B cell (primary cell): ENCODE measurements at regions of chr18 and their contacts with region 1.

Region 1: DNA sequence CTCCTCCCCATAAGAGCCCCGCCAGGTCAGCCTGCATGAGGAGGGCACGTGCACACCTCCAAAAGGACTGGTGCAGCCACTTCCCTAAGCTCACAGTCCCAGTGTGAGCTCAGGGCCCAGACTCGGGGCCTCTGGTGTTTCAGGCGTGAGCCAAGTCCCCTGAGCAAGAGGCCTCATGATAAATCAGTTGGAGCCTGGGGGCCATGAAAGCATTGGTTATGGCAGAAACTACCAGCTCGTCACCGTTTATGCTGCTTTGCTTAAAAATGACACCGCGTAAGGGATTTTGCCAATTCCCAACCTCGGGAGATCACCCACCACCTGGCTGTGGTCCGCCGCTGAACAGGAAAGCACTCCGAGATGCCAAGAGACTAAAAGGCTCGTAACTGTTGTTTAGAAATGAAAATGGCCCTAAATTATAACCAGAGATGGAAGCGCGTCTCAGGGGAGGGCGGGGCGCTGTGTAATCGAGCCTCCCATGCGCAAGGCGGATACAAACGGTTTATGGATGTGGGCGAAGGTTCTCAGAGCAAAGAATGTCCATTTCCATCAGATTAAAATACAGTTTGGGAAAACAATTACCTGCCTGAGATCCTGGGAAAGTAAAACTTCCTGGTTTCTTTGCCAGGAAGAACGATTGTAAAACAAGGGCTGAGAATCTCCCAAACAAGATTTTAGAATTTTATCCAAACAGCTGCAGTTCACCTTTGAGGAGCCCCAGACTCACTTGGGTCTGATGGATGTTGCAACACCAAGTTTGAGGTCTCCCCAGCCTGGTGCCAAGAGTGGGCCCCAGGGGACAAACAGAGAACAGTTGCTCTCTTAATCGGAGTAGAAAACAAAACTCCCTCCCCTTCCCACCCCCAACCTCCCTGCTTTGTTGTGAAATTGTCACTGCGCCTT is 141.4 kb downstream of the BCL2 start:
- DNase-seq: no peak
- ATAC-seq: no peak
- H3K4me3 ChIP-seq: no peak overlapping the region
- H3K4me3 Mint-ChIP-seq: no peak overlapping the region
- H3K27ac ChIP-seq: no peak overlapping the region
- H3K27ac Mint-ChIP-seq: peak overlapping the region; percentile 76
- H3K4me1 ChIP-seq: peaks cover 63 to 73% of the 10 kb centered on the region in 2 donors
- H3K4me1 Mint-ChIP-seq: peaks cover 89% of the 10 kb centered on the region
- H3K27me3 ChIP-seq: no peaks in the 10 kb centered on the region
- H3K27me3 Mint-ChIP-seq: no peaks in the 10 kb centered on the region
- CTCF ChIP-seq: no peak

Region 2: DNA sequence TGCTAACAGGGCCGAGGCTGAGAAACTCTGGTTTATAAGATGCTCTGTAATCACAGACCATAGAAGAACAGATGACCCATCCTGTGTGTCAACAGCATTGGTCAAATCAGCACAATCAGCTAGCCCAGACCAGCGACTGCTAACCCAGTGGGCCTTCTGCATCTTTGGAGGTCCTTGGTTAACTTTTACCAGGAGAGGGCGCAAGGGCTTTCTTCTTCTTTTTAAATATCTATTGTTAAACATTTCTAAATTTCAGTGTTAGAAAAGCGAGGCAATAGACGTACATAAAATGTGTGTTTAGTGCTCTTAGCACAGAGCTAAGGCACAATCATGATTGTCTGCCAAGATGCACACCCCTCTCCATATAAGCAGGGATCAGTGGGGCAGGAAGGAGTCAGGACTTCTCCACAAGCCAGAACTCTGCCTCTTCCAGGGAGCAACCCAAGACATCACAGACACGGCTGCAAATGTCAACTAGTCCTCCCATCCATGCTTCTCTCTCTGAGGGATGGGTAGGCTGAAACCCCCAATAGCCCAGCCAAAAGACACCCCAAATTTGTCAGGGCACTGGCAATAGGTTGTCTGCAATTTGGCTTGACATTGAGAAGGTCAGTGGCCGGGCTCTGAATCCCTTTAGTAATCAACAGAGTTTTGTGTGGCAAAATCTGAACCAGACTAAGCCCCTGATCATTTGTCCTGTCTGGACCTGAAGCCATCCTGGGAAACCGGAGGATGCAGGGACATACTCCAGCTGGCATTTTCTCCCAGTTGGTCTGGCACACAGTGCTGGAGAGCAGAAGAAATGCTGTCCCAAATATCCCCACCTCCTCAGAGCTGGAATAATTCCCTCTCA is 46.8 kb before region 1 on chr18:
- CTCF ChIA-PET with region 1: interaction called, 10 read pairs
- POLR2A ChIA-PET with region 1: no interaction called
- intact Hi-C with region 1: loop called (anchors 10 kb)
- DNase-seq: peak; percentile 79
- ATAC-seq: peak; percentile 69
- H3K4me3 ChIP-seq: no peak overlapping the region
- H3K4me3 Mint-ChIP-seq: no peak overlapping the region
- H3K27ac ChIP-seq: peak overlapping the region in 1 of 2 donors; percentile 22
- H3K27ac Mint-ChIP-seq: peak overlapping the region; percentile 86
- H3K4me1 ChIP-seq: peaks cover 4 to 8% of the 10 kb centered on the region in 2 donors
- H3K4me1 Mint-ChIP-seq: peaks cover 30% of the 10 kb centered on the region
- H3K27me3 ChIP-seq: no peaks in the 10 kb centered on the region
- H3K27me3 Mint-ChIP-seq: no peaks in the 10 kb centered on the region
- CTCF ChIP-seq: peak; percentile 80

Region 3: GRCh38 chr18:63192885-63193349 is 14.7 kb after region 1 on chr18:
- CTCF ChIA-PET with region 1: interaction called, 4 read pairs
- POLR2A ChIA-PET with region 1: interaction called, 5 read pairs
- intact Hi-C with region 1: loop called (anchors 2 kb)
- DNase-seq: peak; percentile 61
- ATAC-seq: peak; percentile 45
- H3K4me3 ChIP-seq: no peak overlapping the region
- H3K4me3 Mint-ChIP-seq: peak overlapping the region; percentile 21
- H3K27ac ChIP-seq: peak overlapping the region; percentile 5 to 61
- H3K27ac Mint-ChIP-seq: peak overlapping the region; percentile 66
- H3K4me1 ChIP-seq: peaks cover 22 to 37% of the 10 kb centered on the region in 2 donors
- H3K4me1 Mint-ChIP-seq: peaks cover 46% of the 10 kb centered on the region
- H3K27me3 ChIP-seq: no peaks in the 10 kb centered on the region
- H3K27me3 Mint-ChIP-seq: no peaks in the 10 kb centered on the region
- CTCF ChIP-seq: no peak